ENCODE measurements at regions of chr10 and their contacts with region 1.

Region 1: GRCh38 chr10:60646966-60647796 is 131.1 kb upstream of the CDK1 start:
- DNase-seq: peak; percentile 27
- H3K4me3 Mint-ChIP-seq: no peak overlapping the region
- H3K27ac Mint-ChIP-seq: no peak overlapping the region
- H3K4me1 Mint-ChIP-seq: peaks cover 26% of the 10 kb centered on the region
- H3K27me3 Mint-ChIP-seq: no peaks in the 10 kb centered on the region

Region 2: GRCh38 chr10:60099998-60100747 is 547.0 kb before region 1 on chr10:
- CTCF ChIA-PET with region 1: interaction called, 4 read pairs
- POLR2A ChIA-PET with region 1: no interaction called
- intact Hi-C with region 1: loop called (anchors 1 kb)
- DNase-seq: no peak
- H3K4me3 Mint-ChIP-seq: no peak overlapping the region
- H3K27ac Mint-ChIP-seq: no peak overlapping the region
- H3K4me1 Mint-ChIP-seq: no peaks in the 10 kb centered on the region
- H3K27me3 Mint-ChIP-seq: no peaks in the 10 kb centered on the region

Region 3: GRCh38 chr10:60237977-60238758 is 409.0 kb before region 1 on chr10:
- CTCF ChIA-PET with region 1: no interaction called
- POLR2A ChIA-PET with region 1: no interaction called
- intact Hi-C with region 1: loop called (anchors 5 kb)
- DNase-seq: peak; percentile 26
- H3K4me3 Mint-ChIP-seq: no peak overlapping the region
- H3K27ac Mint-ChIP-seq: peak overlapping the region; percentile 50
- H3K4me1 Mint-ChIP-seq: peaks cover 31% of the 10 kb centered on the region
- H3K27me3 Mint-ChIP-seq: no peaks in the 10 kb centered on the region

Region 4: GRCh38 chr10:60536529-60537114 is 110.6 kb before region 1 on chr10:
- CTCF ChIA-PET with region 1: no interaction called
- POLR2A ChIA-PET with region 1: no interaction called
- intact Hi-C with region 1: loop called (anchors 2 kb)
- DNase-seq: peak; percentile 51
- H3K4me3 Mint-ChIP-seq: no peak overlapping the region
- H3K27ac Mint-ChIP-seq: peak overlapping the region; percentile 42
- H3K4me1 Mint-ChIP-seq: peaks cover 41% of the 10 kb centered on the region
- H3K27me3 Mint-ChIP-seq: no peaks in the 10 kb centered on the region

Region 5: DNA sequence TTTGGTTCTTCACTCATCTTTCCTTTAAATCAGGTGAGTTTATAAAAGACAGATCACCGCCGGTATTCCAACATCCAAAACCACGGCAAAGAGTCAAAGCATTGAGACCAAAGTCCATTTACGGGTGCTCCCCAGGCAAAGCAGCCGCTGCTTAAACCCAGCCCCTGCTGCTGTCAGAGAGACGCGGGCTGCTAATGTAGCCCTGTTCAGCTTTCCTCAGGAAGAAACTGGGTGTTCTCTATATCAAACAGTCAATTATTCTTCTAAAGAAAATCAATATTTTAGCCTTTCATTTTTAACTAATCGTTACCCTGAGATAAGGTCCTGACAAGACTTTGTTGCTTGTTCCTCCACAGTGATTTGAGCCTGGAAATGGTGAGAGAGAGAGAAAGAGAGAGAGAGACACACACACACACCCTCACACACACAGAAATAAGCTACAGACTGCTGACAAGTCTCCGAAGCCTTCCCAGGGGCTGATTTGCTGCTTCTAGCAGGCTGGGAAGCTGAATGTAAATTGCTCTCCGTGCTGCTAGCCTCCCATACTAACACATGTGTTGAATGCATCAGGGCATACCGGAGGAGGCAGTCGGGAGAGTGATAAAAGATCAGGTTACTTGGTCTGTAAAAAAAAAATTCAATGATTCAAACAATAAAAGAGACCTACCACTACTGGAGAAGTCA is 74.5 kb before region 1 on chr10:
- CTCF ChIA-PET with region 1: interaction called, 12 read pairs
- POLR2A ChIA-PET with region 1: no interaction called
- intact Hi-C with region 1: loop called (anchors 2 kb)
- DNase-seq: peak; percentile 51
- H3K4me3 Mint-ChIP-seq: peak overlapping the region; percentile 83
- H3K27ac Mint-ChIP-seq: peak overlapping the region; percentile 87
- H3K4me1 Mint-ChIP-seq: peaks cover 54% of the 10 kb centered on the region
- H3K27me3 Mint-ChIP-seq: no peaks in the 10 kb centered on the region

Region 6: GRCh38 chr10:60769406-60769805 is 122.2 kb after region 1 on chr10:
- CTCF ChIA-PET with region 1: interaction called, 18 read pairs
- POLR2A ChIA-PET with region 1: no interaction called
- intact Hi-C with region 1: loop called (anchors 2 kb)
- DNase-seq: no peak
- H3K4me3 Mint-ChIP-seq: no peak overlapping the region
- H3K27ac Mint-ChIP-seq: no peak overlapping the region
- H3K4me1 Mint-ChIP-seq: peaks cover 4% of the 10 kb centered on the region
- H3K27me3 Mint-ChIP-seq: no peaks in the 10 kb centered on the region